ENCODE measurements at regions of chr4 and their contacts with region 1.

Region 1: GRCh38 chr4:3106339-3107186 is 32.1 kb downstream of the HTT start:
- DNase-seq: peak; percentile 86 to 92 (median 86)
- ATAC-seq: peak; percentile 95 to 99 (median 98)
- H3K4me3 ChIP-seq: no peak overlapping the region
- H3K27ac ChIP-seq: peak overlapping the region in 7 of 12 donors; percentile 11 to 63 (median 39)
- H3K4me1 ChIP-seq: peaks cover 0 to 35% (median 22%) of the 10 kb centered on the region in 12 donors
- H3K27me3 ChIP-seq: no peaks in the 10 kb centered on the region
- CTCF ChIP-seq: peak; percentile 93 to 98 (median 98)
- POLR2A ChIP-seq: no peak

Region 2: DNA sequence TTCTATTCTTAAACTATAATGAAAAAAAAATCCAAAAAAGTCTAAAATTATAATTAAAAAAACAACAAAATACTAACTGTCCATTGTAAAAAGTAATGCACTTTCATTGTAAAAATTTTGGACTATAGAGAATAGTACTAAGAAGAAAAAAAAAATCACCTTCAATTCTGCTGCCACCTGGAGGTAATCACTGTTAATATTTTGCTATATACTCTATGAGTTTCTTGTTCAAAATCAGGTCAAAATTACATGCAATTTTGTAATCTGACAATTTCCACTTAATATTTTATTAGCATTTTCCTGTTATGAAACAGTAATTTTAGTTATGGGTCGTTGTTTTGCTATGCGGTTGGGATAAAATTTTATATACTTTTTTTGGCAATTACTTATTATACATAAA is 29.9 kb after region 1 on chr4:
- intact Hi-C with region 1: loop called in 5 of 10 experiments (anchors 1 to 2 kb)
- DNase-seq: no peak
- ATAC-seq: no peak
- H3K4me3 ChIP-seq: no peak overlapping the region
- H3K27ac ChIP-seq: no peak overlapping the region
- H3K4me1 ChIP-seq: peaks cover 0 to 5% (median 0%) of the 10 kb centered on the region in 12 donors
- H3K27me3 ChIP-seq: no peaks in the 10 kb centered on the region
- CTCF ChIP-seq: peak; percentile 17 to 55 (median 33)
- POLR2A ChIP-seq: no peak